ENCODE measurements at regions of chr6 and their contacts with region 1.

Region 1: GRCh38 chr6:39228992-39229767 is at the start of gene KCNK5:
- DNase-seq: peak; percentile 96
- H3K4me3 ChIP-seq: peak within 1 kb of the TSS; percentile 44 to 49; a peak in 3 of 4 replicates
- H3K27ac ChIP-seq: no peak within 1 kb of the TSS
- H3K4me1 ChIP-seq: peaks cover 0 to 8% of the 10 kb centered on the region in 2 experiments; a peak in 1 of 4 replicates
- H3K27me3 ChIP-seq: no peaks in the 10 kb centered on the region
- CTCF ChIP-seq: peak; percentile 26
- EP300 ChIP-seq: no peak
- RAD21 ChIP-seq: no peak
- polyA plus RNA-seq, gene KCNK5: 0.03 TPM in 1 of 2 replicates, not detected in the other

Region 2: DNA sequence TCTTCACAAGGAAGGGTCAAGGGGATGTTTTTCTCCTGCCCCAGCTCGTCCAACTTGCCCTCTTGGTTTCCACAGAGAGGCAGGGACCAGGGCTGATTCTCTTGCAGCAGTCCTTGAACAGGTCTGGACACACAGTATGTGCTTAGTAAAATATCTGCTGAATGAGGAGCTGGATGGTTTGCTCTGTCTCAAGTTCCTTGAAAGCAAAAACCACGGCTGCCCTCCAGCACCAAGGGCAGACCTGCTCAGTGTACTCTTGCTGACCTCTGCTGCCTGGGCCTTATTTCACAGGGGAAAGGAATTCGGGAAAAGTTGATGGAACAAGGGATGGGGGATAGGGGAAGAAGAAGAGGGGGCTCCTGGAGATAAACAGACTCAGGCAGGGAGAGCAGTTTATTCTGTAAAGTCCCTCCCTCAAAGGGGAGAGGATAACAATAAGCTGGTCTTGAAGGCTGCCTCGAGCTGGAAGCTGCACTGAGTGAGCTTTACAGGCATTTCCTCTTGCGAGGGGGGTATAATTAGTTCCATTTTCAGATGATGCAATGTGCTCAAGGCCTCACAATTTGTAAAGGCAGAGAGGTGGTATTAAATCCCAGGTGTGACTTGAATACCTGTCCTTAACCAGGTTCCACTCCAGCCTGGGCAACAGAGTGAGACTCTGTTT is 10.2 kb before region 1 on chr6:
- CTCF ChIA-PET with region 1: interaction called, 22 read pairs
- POLR2A ChIA-PET with region 1: no interaction called
- DNase-seq: no peak
- H3K4me3 ChIP-seq: no peak overlapping the region
- H3K27ac ChIP-seq: no peak overlapping the region
- H3K4me1 ChIP-seq: no peaks in the 10 kb centered on the region
- H3K27me3 ChIP-seq: no peaks in the 10 kb centered on the region
- CTCF ChIP-seq: no peak
- EP300 ChIP-seq: no peak
- RAD21 ChIP-seq: 0 out of 2 replicates have a peak, but pooled peaks have one; percentile 2